WTC11 (cell line): ENCODE measurements at regions of chr11 and their contacts with region 1.

Region 1: DNA sequence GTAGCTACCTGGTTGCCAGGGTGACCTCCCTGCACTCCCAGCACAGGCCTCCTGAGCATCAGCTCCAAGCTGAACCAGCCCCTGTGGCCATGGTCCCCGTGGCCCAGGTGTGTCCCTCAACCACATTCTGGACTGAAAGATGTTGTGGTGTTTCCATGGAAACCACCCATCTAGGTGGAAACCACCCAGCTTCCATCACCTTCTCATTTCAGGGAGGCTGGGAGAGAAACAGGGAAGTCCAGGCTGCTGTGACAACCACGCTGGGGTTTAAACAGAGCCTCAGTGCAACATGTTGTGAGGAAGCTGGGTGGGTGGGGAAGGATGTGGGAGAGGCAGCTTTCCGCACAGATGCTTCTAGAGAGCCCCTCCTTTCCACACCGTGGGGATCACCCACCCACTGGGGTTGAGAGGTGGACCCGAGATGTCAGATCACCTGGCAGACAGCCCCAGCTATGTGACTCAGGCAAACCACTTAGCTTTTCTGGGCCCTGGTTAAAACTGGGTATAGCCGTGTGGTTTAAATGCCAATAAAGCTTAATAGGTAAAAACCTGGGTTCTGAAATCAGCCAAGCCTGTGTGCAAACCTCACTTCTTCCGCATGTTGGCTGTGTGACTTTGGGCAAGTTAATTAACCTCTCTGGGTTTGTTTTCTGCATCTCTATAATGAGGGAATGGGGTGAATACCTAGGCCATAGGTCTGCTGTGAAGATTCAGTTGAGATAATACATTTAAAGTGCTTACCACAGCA is 46.4 kb downstream of the CD82 start:
- DNase-seq: no peak
- ATAC-seq: no peak
- H3K4me3 Mint-ChIP-seq: no peak overlapping the region
- H3K27ac Mint-ChIP-seq: no peak overlapping the region
- H3K4me1 Mint-ChIP-seq: peaks cover 31% of the 10 kb centered on the region
- H3K27me3 Mint-ChIP-seq: no peaks in the 10 kb centered on the region; the same call in 1 of the 2 replicates
- CTCF ChIP-seq: no peak

Region 2: GRCh38 chr11:44519989-44520737 is 91.7 kb before region 1 on chr11:
- CTCF ChIA-PET with region 1: interaction called, 20 read pairs
- POLR2A ChIA-PET with region 1: no interaction called
- DNase-seq: no peak
- ATAC-seq: peak; percentile 38
- H3K4me3 Mint-ChIP-seq: no peak overlapping the region
- H3K27ac Mint-ChIP-seq: no peak overlapping the region
- H3K4me1 Mint-ChIP-seq: peaks cover 11% of the 10 kb centered on the region
- H3K27me3 Mint-ChIP-seq: peaks cover 4% of the 10 kb centered on the region; the same call in 1 of the 2 replicates
- CTCF ChIP-seq: no peak

Region 3: DNA sequence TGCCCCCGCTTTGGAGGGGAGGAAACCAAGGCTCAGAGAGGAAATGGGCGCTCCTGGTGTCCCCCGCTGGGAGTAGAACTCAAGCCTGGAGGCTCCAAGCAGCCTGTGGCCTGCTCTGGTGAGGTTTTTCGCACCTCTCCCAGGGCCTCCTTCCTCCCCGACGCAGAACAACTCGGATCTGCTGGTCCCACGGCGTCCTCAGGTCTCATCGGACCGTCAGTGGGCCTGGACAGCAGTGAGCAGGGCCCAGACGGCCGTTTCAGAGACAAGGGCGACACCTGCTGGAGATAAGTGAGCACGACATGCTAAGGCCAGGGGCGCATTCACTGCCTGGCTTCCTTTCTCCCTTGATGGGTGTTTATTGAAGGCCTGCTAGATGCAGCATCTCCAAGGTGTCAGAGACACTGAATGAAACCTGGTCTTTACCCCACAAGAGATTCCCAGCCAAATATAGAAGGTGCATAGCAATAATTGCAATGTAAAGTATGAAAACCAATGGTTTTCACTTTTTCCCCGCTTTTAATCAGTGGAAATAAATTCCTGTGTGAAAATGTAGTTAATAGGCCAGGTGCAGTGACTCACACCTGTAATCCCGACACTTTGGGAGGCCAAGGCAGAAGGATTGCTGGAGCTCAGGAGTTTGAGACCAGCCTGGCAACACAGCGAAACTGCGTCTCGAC is 73.3 kb before region 1 on chr11:
- CTCF ChIA-PET with region 1: interaction called, 13 read pairs
- POLR2A ChIA-PET with region 1: no interaction called
- DNase-seq: peak; percentile 85
- ATAC-seq: peak; percentile 92
- H3K4me3 Mint-ChIP-seq: peak overlapping the region; percentile 24
- H3K27ac Mint-ChIP-seq: no peak overlapping the region
- H3K4me1 Mint-ChIP-seq: peaks cover 13% of the 10 kb centered on the region
- H3K27me3 Mint-ChIP-seq: peaks cover 8% of the 10 kb centered on the region
- CTCF ChIP-seq: peak; percentile 97

Region 4: DNA sequence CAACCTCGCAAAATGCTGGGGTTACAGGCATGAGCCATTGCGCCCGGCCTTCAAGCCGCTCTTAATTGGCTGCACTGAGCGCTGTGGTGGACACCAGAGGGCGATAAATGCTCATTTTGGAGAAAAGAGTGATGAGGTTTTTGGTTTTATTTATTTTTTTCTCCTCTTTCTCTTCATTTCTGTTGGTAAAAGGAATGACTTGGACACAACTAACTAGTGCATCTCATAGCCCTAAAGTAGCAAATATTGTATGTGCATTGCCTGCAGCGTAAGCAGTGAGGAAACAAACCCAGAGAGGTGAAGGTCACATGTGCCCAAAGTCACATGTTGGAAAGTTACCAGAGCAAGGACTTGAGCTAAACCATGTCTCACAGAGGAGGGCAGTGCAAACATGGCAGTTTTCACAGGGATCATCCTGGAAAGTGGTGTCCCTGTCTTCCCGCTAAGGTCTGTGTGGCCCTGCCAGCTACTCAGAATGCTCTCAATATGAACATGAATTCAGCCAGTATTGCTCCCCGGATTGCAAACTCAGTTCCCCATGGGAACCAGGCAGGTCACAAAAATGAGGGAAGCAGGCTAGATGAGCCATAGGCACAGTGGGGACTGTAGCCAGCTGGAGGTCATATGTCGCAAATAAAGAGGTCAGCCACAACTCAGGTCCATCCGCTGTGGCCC is 55.0 kb before region 1 on chr11:
- CTCF ChIA-PET with region 1: interaction called, 250 read pairs
- POLR2A ChIA-PET with region 1: interaction called, 3 read pairs
- DNase-seq: peak; percentile 67
- ATAC-seq: peak; percentile 32
- H3K4me3 Mint-ChIP-seq: no peak overlapping the region
- H3K27ac Mint-ChIP-seq: no peak overlapping the region; the same call in 1 of the 2 replicates
- H3K4me1 Mint-ChIP-seq: peaks cover 31% of the 10 kb centered on the region
- H3K27me3 Mint-ChIP-seq: peaks cover 8% of the 10 kb centered on the region
- CTCF ChIP-seq: peak; percentile 53

Region 5: GRCh38 chr11:44565211-44565952 is 46.5 kb before region 1 on chr11 and contains the start of gene CD82:
- CTCF ChIA-PET with region 1: interaction called, 250 read pairs
- POLR2A ChIA-PET with region 1: no interaction called
- DNase-seq: peak; percentile 100
- ATAC-seq: peak; percentile 98
- H3K4me3 Mint-ChIP-seq: peak within 1 kb of the TSS; percentile 67
- H3K27ac Mint-ChIP-seq: 0 out of 2 replicates have a peak within 1 kb of the TSS, but pooled peaks have one; percentile 63
- H3K4me1 Mint-ChIP-seq: peaks cover 51% of the 10 kb centered on the region
- H3K27me3 Mint-ChIP-seq: peaks cover 48% of the 10 kb centered on the region
- CTCF ChIP-seq: no peak
- total RNA-seq, gene CD82: 15.5 to 19.8 TPM (median 19.3 TPM) in 3 replicates

Region 6: DNA sequence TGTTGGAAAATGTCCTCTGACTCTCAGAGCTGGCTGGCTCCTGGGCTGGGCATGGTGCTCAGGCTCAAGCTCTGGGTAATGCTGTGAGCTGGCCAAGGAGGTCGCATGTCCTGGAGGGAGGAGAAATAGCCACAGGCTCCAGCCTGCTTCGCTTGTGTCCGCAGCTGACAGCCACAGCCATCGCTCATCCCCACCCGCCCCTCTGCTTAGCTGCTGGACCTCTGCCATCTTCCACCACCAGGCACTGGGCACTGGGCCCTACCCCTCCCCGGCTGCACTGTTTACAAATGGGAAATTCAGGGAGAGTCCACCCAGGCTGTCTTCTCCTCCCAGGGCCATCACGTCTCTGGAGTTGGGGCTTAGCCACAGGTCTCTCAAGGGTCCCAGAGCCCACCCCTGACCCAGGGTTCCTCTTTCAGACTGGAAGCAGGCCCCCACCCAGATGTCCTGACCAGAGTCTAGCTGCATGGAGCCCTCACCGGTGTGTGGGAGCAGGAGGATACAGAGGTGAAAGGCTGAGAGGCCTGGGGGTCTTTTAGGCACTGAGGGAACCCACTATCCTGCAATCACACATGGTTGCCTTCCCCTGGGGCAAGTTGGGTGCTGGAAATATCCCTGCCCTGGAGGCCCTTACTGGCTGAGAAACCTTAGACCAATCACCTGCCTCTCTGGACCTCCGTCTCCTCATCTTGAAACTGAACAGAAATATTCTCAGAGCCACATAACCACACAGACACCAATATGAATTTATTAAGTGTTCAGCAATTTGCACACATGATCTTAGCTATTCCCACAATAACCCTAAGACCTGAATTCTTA is 16.3 kb after region 1 on chr11:
- CTCF ChIA-PET with region 1: interaction called, 16 read pairs
- POLR2A ChIA-PET with region 1: no interaction called
- DNase-seq: no peak
- ATAC-seq: no peak
- H3K4me3 Mint-ChIP-seq: no peak overlapping the region
- H3K27ac Mint-ChIP-seq: no peak overlapping the region
- H3K4me1 Mint-ChIP-seq: peaks cover 15% of the 10 kb centered on the region
- H3K27me3 Mint-ChIP-seq: peaks cover 3% of the 10 kb centered on the region
- CTCF ChIP-seq: no peak